GM23248 (cell line): ENCODE measurements at regions of chr11 and their contacts with region 1.

Region 1: GRCh38 chr11:28674433-28675103 is 566.4 kb downstream of the METTL15 start:
- DNase-seq: peak; percentile 83
- H3K4me3 ChIP-seq: peak overlapping the region; percentile 52
- H3K27ac ChIP-seq: peak overlapping the region; percentile 69
- H3K4me1 ChIP-seq: peaks cover 29% of the 10 kb centered on the region
- H3K27me3 ChIP-seq: no peaks in the 10 kb centered on the region

Region 2: GRCh38 chr11:27718346-27718852 is 956.2 kb before region 1 on chr11:
- in situ Hi-C with region 1: loop called (anchors 10 kb)
- DNase-seq: peak; percentile 92
- H3K4me3 ChIP-seq: peak overlapping the region; percentile 85
- H3K27ac ChIP-seq: peak overlapping the region; percentile 83
- H3K4me1 ChIP-seq: peaks cover 22% of the 10 kb centered on the region
- H3K27me3 ChIP-seq: peaks cover 17% of the 10 kb centered on the region

Region 3: DNA sequence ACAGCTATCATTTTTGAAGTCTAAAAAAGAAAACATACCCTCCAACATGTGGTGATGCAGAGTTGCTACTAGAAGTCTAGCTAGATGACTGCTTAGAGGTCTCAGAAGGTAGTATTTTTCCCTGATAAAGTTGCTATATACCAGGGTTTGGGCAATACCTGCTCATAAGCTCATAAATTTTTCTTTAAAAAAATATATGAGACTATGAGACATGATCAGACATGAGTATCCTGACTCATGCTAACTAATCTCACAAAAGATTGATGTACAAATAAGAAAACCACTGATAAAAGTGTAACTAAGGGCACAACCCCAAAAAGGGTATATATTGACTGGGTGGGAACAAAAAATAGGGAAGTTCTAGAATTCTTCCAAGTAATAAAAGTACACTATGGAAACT is 174.5 kb after region 1 on chr11:
- in situ Hi-C with region 1: no loop called
- DNase-seq: no peak
- H3K4me3 ChIP-seq: no peak overlapping the region
- H3K27ac ChIP-seq: no peak overlapping the region
- H3K4me1 ChIP-seq: no peaks in the 10 kb centered on the region
- H3K27me3 ChIP-seq: no peaks in the 10 kb centered on the region